ENCODE measurements at regions of chr1 and their contacts with region 1.

Region 1: DNA sequence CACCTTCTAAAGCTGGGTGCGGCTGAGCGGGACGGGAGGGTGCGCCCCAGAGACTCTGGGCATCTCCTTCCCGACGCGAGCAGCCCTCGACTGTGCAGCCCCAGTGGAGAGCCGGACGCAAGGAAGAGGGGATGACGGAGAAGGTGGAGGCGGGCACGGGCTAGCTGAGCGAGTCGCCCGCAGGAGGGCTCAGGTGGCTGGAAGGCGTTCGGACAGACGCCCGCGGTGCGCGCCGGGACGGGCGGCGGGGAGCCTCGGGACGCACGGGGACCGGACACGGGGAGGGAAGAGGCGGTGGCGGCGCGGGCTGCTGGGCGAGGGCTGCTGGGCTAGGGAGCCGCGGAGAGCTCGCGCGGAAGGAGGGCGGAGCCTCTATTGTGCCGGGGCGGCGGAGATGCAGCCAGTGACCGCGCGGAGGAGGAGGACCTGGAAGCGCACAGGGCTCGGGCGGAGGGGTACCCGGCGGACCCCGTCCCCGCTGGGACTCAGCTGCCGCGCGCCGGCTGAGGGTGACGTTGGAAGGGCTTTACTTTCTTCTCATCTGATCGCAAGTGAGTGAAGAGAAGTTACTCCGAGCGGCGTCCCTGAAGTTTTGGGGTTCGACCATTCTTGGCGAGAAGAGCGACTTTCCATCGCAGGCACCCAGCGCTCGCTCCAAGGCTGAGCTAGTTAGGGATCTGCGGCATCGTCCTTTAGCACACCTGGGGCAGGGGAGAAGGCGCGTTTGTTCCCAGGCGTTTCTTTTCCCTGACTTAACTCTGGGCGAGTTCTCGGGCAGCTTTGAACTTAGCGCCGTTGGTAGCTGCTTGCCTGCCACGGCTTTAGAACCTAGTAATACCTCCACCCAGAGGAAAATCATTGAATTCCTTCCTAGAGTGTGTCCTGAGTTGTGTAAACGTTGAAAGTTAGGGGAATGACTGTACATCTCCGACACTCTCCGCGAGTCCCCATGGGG is at the start of gene OLFML2B:
- DNase-seq: peak; percentile 56 to 69 (median 67)
- H3K4me3 ChIP-seq: peak within 1 kb of the TSS; percentile 46 to 95 (median 83)
- H3K27ac ChIP-seq: no peak within 1 kb of the TSS
- H3K4me1 ChIP-seq: peaks cover 4 to 17% (median 12%) of the 10 kb centered on the region in 4 experiments
- H3K27me3 ChIP-seq: peaks cover 0 to 19% (median 5%) of the 10 kb centered on the region in 5 experiments

Region 2: GRCh38 chr1:161864577-161864976 is 159.2 kb before region 1 on chr1:
- CTCF ChIA-PET with region 1: interaction called, 17 read pairs
- POLR2A ChIA-PET with region 1: no interaction called
- DNase-seq: peak; percentile 27 to 53 (median 51)
- H3K4me3 ChIP-seq: no peak overlapping the region
- H3K27ac ChIP-seq: no peak overlapping the region
- H3K4me1 ChIP-seq: no peaks in the 10 kb centered on the region
- H3K27me3 ChIP-seq: no peaks in the 10 kb centered on the region

Region 3: DNA sequence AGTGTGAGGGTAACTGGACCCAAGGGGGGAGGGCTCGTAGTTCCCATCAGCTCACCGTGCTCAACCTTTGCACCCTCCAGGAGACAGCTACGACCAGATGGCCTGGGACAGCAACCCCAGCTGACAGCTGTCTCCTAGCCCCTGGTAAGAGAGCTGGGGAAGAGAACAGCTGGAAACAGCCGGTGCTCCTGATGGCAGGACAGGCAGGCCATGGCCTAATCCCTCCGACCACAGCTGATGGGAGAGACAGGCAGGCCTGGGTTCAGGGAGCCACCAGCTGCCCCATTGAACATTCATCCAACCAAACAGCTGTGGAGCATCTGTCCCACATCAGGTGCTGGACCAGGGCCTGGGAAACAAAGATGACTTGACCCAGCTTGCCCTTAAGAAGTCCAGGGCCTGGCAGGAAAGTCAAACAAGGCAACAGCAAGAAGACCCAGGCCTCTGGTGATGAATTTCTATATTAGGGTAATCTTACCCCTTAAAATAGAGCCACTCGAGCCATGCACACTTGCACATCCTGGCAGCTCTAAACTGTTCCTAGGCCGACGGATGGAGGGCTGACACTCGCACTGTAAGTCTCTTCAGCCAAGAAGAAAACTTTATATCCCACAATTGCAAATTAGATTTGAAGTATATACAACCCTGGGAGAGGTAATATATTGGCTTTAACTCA is 12.3 kb before region 1 on chr1:
- CTCF ChIA-PET with region 1: interaction called, 10 read pairs
- POLR2A ChIA-PET with region 1: interaction called, 4 read pairs
- DNase-seq: no peak
- H3K4me3 ChIP-seq: no peak overlapping the region
- H3K27ac ChIP-seq: no peak overlapping the region
- H3K4me1 ChIP-seq: peaks cover 0 to 4% (median 2%) of the 10 kb centered on the region in 4 experiments
- H3K27me3 ChIP-seq: no peaks in the 10 kb centered on the region

Region 4: GRCh38 chr1:162151900-162152829 is 128.3 kb after region 1 on chr1:
- CTCF ChIA-PET with region 1: no interaction called
- POLR2A ChIA-PET with region 1: no interaction called
- DNase-seq: peak; percentile 23 to 79 (median 76)
- H3K4me3 ChIP-seq: no peak overlapping the region
- H3K27ac ChIP-seq: no peak overlapping the region
- H3K4me1 ChIP-seq: peaks cover 0 to 6% (median 1%) of the 10 kb centered on the region in 4 experiments
- H3K27me3 ChIP-seq: no peaks in the 10 kb centered on the region

Measured in common myeloid progenitor, CD34-positive (primary cell).